ENCODE measurements at regions of chr12 and their contacts with region 1.

Region 1: DNA sequence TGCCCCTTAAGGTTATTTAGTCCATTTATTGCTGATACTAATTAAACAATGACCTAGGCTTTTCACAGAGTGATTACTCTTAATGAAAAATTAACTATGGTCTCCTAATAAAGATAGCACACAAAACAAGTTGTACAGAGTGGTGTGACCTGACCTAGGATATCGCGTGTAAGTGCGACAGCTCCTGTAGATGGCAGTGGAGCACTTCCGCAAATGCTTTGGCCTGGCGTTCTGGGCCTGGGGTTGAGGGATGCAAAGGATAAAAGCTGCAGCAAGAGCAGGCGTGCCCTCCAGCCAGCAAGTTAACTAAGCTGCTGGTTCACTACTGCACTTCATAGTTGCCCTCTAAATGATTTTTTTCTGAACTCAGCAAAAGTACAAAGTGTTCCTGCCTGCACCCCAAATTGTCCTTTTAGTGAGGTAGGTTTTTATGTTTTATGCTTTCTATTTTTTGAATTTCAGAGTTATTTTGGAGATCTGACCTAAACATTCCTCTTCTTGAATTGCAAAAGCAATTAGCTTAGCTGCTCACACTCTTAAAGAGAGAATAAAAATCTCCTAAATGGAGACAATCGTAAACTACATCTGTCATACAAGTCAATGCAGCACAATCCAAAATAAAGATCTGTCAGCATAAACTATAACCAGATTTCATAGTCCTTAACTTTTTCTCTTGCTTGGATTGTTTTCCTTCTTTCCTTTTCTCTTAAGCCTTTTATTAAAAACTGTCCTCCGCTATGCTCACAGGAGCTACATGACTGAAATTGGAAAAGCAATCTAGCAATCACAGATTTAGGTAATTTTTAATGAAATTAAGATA is 379.6 kb downstream of the LRIG3 start:
- DNase-seq: peak; percentile 84
- ATAC-seq: peak; percentile 96
- H3K4me3 Mint-ChIP-seq: no peak overlapping the region
- H3K27ac Mint-ChIP-seq: no peak overlapping the region
- H3K4me1 Mint-ChIP-seq: peaks cover 40% of the 10 kb centered on the region
- H3K27me3 Mint-ChIP-seq: no peaks in the 10 kb centered on the region; the same call in 1 of the 2 replicates
- CTCF ChIP-seq: peak; percentile 56

Region 2: DNA sequence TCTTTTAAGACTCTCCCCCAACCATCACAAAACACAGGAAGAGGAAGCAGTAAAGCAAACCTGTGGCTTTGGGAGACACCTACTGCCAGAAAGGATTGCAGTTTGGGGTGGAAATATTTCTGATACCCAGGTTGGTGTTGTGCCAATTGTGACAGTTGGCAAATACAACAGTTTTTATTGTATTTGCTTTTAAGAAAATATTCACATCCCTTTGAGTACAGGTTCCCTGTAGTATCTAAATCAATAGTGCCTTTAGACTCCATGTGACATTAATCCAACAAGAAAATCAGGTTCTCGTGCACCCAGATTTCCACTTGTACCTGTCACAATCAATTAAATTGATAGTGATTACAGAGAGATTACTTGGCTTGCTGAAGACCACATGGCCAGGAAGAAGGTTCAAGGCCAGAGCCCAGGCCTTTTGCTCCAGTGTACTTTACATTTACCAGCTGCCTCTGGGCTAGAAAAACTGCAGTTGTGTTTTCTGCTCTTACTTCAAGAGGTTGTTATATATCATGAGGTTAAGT is 238.1 kb before region 1 on chr12:
- CTCF ChIA-PET with region 1: no interaction called
- POLR2A ChIA-PET with region 1: no interaction called
- DNase-seq: no peak
- ATAC-seq: 0 out of 2 replicates have a peak, but pooled peaks have one; percentile 34
- H3K4me3 Mint-ChIP-seq: no peak overlapping the region
- H3K27ac Mint-ChIP-seq: no peak overlapping the region
- H3K4me1 Mint-ChIP-seq: peaks cover 11% of the 10 kb centered on the region
- H3K27me3 Mint-ChIP-seq: no peaks in the 10 kb centered on the region
- CTCF ChIP-seq: no peak

Region 3: DNA sequence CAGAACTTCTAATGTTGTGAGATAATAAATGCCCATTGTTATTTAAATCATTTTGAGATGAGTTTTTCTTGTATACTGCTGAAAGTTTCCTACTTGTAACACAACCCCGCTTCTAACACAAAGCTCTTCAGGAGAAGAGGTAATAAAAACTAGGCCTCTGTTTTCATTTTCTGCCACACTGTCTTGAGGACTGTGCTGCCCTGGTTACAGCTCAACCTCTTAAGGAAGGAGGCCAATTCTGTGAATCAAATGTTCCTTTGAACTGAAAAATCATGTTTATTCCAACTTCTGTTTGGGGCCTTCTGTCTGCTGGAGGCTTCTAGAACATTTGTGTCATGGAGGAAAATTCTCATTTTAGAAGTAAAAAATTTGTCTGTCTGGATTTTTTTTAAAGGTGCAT is 279.3 kb after region 1 on chr12:
- CTCF ChIA-PET with region 1: interaction called, 27 read pairs
- POLR2A ChIA-PET with region 1: no interaction called
- DNase-seq: no peak
- ATAC-seq: no peak
- H3K4me3 Mint-ChIP-seq: no peak overlapping the region
- H3K27ac Mint-ChIP-seq: no peak overlapping the region
- H3K4me1 Mint-ChIP-seq: peaks cover 11% of the 10 kb centered on the region
- H3K27me3 Mint-ChIP-seq: no peaks in the 10 kb centered on the region
- CTCF ChIP-seq: no peak

Region 4: GRCh38 chr12:59084511-59085375 is 544.1 kb after region 1 on chr12:
- CTCF ChIA-PET with region 1: interaction called, 11 read pairs
- POLR2A ChIA-PET with region 1: no interaction called
- DNase-seq: peak; percentile 27
- ATAC-seq: peak; percentile 71
- H3K4me3 Mint-ChIP-seq: no peak overlapping the region
- H3K27ac Mint-ChIP-seq: peak overlapping the region; percentile 71
- H3K4me1 Mint-ChIP-seq: peaks cover 38% of the 10 kb centered on the region
- H3K27me3 Mint-ChIP-seq: no peaks in the 10 kb centered on the region
- CTCF ChIP-seq: no peak

Region 5: GRCh38 chr12:59149997-59150642 is 609.4 kb after region 1 on chr12:
- CTCF ChIA-PET with region 1: interaction called, 27 read pairs
- POLR2A ChIA-PET with region 1: no interaction called
- DNase-seq: no peak
- ATAC-seq: peak; percentile 94
- H3K4me3 Mint-ChIP-seq: no peak overlapping the region
- H3K27ac Mint-ChIP-seq: no peak overlapping the region
- H3K4me1 Mint-ChIP-seq: peaks cover 9% of the 10 kb centered on the region
- H3K27me3 Mint-ChIP-seq: no peaks in the 10 kb centered on the region
- CTCF ChIP-seq: peak; percentile 73